B cell (primary cell): ENCODE measurements at regions of chr15 and their contacts with region 1.

Region 1: DNA sequence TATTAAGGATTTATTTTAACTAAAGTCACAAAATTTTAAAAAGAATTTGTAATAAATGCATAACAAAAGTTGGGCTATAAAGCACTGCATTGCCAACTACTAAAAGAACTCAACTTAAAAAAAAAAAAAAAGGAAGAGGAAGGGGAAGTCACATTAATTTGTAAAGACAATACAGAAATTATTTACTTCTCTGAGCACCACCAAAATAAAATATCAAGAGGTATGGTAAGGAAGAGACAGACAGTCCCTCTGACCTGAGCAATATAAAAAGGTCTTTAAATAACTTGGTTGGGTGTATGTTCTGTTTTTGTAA is 83.5 kb downstream of the UACA start:
- DNase-seq: no peak
- ATAC-seq: no peak
- H3K4me3 ChIP-seq: no peak overlapping the region
- H3K4me3 Mint-ChIP-seq: no peak overlapping the region
- H3K27ac ChIP-seq: no peak overlapping the region
- H3K27ac Mint-ChIP-seq: no peak overlapping the region
- H3K4me1 ChIP-seq: no peaks in the 10 kb centered on the region
- H3K4me1 Mint-ChIP-seq: peaks cover 1% of the 10 kb centered on the region
- H3K27me3 ChIP-seq: no peaks in the 10 kb centered on the region
- H3K27me3 Mint-ChIP-seq: peaks cover 20% of the 10 kb centered on the region
- CTCF ChIP-seq: peak; percentile 38

Region 2: GRCh38 chr15:70669006-70669602 is 10.8 kb before region 1 on chr15:
- CTCF ChIA-PET with region 1: interaction called, 12 read pairs
- POLR2A ChIA-PET with region 1: no interaction called
- intact Hi-C with region 1: no loop called
- DNase-seq: no peak
- ATAC-seq: no peak
- H3K4me3 ChIP-seq: no peak overlapping the region
- H3K4me3 Mint-ChIP-seq: no peak overlapping the region
- H3K27ac ChIP-seq: no peak overlapping the region
- H3K27ac Mint-ChIP-seq: no peak overlapping the region
- H3K4me1 ChIP-seq: peaks cover 9 to 10% of the 10 kb centered on the region in 2 donors
- H3K4me1 Mint-ChIP-seq: peaks cover 8% of the 10 kb centered on the region
- H3K27me3 ChIP-seq: peaks cover 0 to 6% (median 4%) of the 10 kb centered on the region in 4 experiments
- H3K27me3 Mint-ChIP-seq: peaks cover 12% of the 10 kb centered on the region
- CTCF ChIP-seq: no peak